ENCODE measurements at regions of chr3 and their contacts with region 1.

Region 1: GRCh38 chr3:71487418-71487817 is 96.1 kb downstream of the FOXP1 start:
- DNase-seq: no peak
- ATAC-seq: peak; percentile 11
- H3K4me3 Mint-ChIP-seq: peak overlapping the region; percentile 54
- H3K27ac Mint-ChIP-seq: peak overlapping the region; percentile 88
- H3K4me1 Mint-ChIP-seq: peaks cover 88% of the 10 kb centered on the region
- H3K27me3 Mint-ChIP-seq: no peaks in the 10 kb centered on the region

Region 2: DNA sequence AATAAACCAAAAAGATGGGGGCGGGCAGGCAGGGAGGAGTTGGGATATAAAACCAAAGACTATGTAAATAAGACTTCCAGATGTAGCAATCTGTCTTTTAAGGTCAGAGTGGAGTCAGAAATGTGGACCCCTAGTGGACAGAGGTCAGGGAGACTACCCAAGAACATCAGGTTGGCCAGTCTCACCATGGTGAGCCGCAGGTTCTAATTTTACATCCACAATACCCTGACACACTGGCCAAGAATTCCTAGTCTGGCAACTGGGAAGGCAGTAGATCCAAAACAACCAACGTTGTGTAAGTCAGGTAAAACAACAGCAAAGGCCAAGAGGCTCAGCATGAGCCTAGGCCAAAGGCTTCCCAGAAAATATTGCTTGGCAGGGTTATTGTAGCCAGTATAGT is 107.3 kb before region 1 on chr3:
- CTCF ChIA-PET with region 1: no interaction called
- POLR2A ChIA-PET with region 1: no interaction called
- intact Hi-C with region 1: loop called in 1 of 2 experiments (anchors 2 kb)
- DNase-seq: no peak
- ATAC-seq: no peak
- H3K4me3 Mint-ChIP-seq: no peak overlapping the region
- H3K27ac Mint-ChIP-seq: peak overlapping the region; percentile 7
- H3K4me1 Mint-ChIP-seq: peaks cover 91% of the 10 kb centered on the region
- H3K27me3 Mint-ChIP-seq: no peaks in the 10 kb centered on the region

Region 3: GRCh38 chr3:71389911-71390573 is 97.4 kb before region 1 on chr3:
- CTCF ChIA-PET with region 1: no interaction called
- POLR2A ChIA-PET with region 1: no interaction called
- intact Hi-C with region 1: loop called in 1 of 2 experiments (anchors 2 kb)
- DNase-seq: peak; percentile 52
- ATAC-seq: peak; percentile 18
- H3K4me3 Mint-ChIP-seq: peak overlapping the region; percentile 52
- H3K27ac Mint-ChIP-seq: peak overlapping the region; percentile 69
- H3K4me1 Mint-ChIP-seq: peaks cover 78% of the 10 kb centered on the region
- H3K27me3 Mint-ChIP-seq: no peaks in the 10 kb centered on the region

Region 4: GRCh38 chr3:71456156-71456555 is 31.3 kb before region 1 on chr3:
- CTCF ChIA-PET with region 1: interaction called, 8 read pairs
- POLR2A ChIA-PET with region 1: no interaction called
- intact Hi-C with region 1: loop called (anchors 2 kb)
- DNase-seq: no peak
- ATAC-seq: peak; percentile 10
- H3K4me3 Mint-ChIP-seq: peak overlapping the region; percentile 62
- H3K27ac Mint-ChIP-seq: peak overlapping the region; percentile 92
- H3K4me1 Mint-ChIP-seq: peaks cover 91% of the 10 kb centered on the region
- H3K27me3 Mint-ChIP-seq: no peaks in the 10 kb centered on the region

Region 5: DNA sequence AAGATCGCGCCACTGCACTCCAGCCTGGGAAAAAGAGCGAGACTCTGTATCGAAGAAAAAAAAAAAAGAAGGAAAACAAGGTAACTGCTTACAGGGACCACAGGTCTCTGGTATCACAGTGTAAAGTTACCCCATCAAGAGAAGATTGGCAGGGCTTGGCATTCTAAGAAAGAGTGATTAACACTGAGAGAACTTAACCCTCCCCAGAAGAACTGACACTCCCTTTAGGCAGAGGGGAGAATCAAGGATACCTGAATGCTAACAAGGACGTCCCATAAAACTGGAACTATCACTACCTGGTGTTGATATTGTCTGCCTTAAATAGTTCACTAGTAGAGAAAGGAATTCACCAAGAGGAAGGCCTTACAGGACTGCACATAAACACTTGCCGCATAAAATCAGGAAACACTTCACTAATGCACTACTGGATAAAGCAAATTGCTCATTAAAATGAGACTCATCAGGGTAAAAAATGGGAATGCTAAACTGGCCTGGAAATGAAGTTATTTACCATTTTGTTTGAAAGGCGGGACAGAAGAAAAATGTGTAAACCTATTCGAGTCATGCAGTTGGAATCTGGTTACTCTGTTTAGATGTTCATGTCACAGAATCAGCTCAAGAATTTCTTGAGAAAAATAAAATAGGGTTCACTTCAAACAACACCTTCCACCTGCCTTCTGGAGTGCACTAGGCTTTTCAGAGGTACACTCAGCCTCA is 25.5 kb before region 1 on chr3:
- CTCF ChIA-PET with region 1: interaction called, 5 read pairs
- POLR2A ChIA-PET with region 1: no interaction called
- intact Hi-C with region 1: loop called (anchors 2 kb)
- DNase-seq: no peak
- ATAC-seq: no peak
- H3K4me3 Mint-ChIP-seq: no peak overlapping the region
- H3K27ac Mint-ChIP-seq: peak overlapping the region; percentile 94
- H3K4me1 Mint-ChIP-seq: peaks cover 82% of the 10 kb centered on the region
- H3K27me3 Mint-ChIP-seq: no peaks in the 10 kb centered on the region

Measured in activated CD4-positive, alpha-beta T cell treated with anti-CD3 and anti-CD28 coated beads for 36 hours (primary cell).